ENCODE measurements at regions of chrX and their contacts with region 1.

Region 1: GRCh38 chrX:54044126-54044876 is at the start of gene PHF8:
- DNase-seq: peak; percentile 86
- ATAC-seq: peak; percentile 67
- H3K4me3 ChIP-seq: peak within 1 kb of the TSS; percentile 74 to 79 (median 79)
- H3K27ac ChIP-seq: peak within 1 kb of the TSS; percentile 99
- H3K4me1 ChIP-seq: peaks cover 47% of the 10 kb centered on the region
- H3K27me3 ChIP-seq: no peaks in the 10 kb centered on the region
- CTCF ChIP-seq: 0 out of 2 replicates have a peak, but pooled peaks have one; percentile 2
- EP300 ChIP-seq: peak in 1 of 2 experiments; percentile 18; a peak in 1 of 4 replicates
- POLR2A ChIP-seq: peak; percentile 45 to 56; a peak in 3 of 4 replicates
- RAD21 ChIP-seq: no peak
- total RNA-seq, gene PHF8: 15.5 and 22.0 TPM in 2 replicates

Region 2: GRCh38 chrX:53864591-53864990 is 179.7 kb before region 1 on chrX:
- CTCF ChIA-PET with region 1: no interaction called
- POLR2A ChIA-PET with region 1: no interaction called
- in situ Hi-C with region 1: no loop called
- intact Hi-C with region 1: no loop called
- DNase-seq: no peak
- ATAC-seq: no peak
- H3K4me3 ChIP-seq: no peak overlapping the region
- H3K27ac ChIP-seq: no peak overlapping the region
- H3K4me1 ChIP-seq: no peaks in the 10 kb centered on the region
- H3K27me3 ChIP-seq: no peaks in the 10 kb centered on the region
- CTCF ChIP-seq: no peak
- EP300 ChIP-seq: no peak
- POLR2A ChIP-seq: no peak
- RAD21 ChIP-seq: no peak

Region 3: GRCh38 chrX:54093159-54093558 is 48.9 kb after region 1 on chrX:
- CTCF ChIA-PET with region 1: no interaction called
- POLR2A ChIA-PET with region 1: interaction called, 3 read pairs
- in situ Hi-C with region 1: no loop called
- intact Hi-C with region 1: loop called (anchors 10 kb)
- DNase-seq: no peak
- ATAC-seq: no peak
- H3K4me3 ChIP-seq: no peak overlapping the region
- H3K27ac ChIP-seq: no peak overlapping the region
- H3K4me1 ChIP-seq: 0 out of 2 replicates have a peak, but pooled peaks cover 10% of the 10 kb centered on the region
- H3K27me3 ChIP-seq: no peaks in the 10 kb centered on the region
- CTCF ChIP-seq: no peak
- EP300 ChIP-seq: no peak
- POLR2A ChIP-seq: no peak
- RAD21 ChIP-seq: no peak

Region 4: DNA sequence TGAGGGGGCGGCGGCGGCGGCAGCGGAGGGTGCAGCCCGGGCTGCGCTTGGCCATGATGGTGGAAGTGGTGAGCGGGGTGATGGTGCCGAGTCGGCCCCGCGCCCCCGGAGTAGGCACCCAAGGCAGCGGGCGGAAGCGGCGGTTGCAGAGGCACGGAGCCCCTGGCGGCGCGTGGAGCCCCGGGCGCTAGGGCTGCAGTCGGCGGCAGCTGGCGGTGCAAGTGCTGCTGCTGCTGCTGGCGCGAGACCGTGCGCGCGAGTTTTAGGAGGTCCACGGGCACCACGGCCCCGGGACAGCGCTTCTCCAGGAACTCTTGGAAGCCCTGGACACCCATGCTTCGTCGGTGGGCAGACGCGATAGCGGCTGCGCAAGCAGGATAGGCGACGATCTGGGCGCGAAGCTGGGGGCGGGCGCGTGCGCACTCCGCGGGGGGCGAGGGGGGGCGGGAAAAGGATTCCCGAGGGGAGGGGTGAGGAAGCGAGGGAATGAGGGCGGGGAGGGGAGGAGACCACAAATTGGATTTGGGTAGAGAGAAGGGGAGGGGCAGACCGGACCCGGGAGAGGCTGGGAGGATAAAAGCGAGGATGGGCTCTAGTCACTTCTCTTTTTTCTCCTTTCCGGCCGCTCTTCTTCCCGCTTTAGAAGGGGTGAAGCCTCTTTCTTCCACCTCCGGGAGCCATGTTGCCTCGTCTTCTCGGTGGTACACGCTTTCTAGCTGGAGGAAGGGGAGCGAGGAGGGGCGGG is 138.7 kb after region 1 on chrX and contains the start of gene FAM120C:
- CTCF ChIA-PET with region 1: no interaction called
- POLR2A ChIA-PET with region 1: interaction called, 23 read pairs
- in situ Hi-C with region 1: loop called (anchors 5 kb)
- intact Hi-C with region 1: loop called (anchors 10 kb)
- DNase-seq: peak; percentile 51
- ATAC-seq: peak; percentile 88
- H3K4me3 ChIP-seq: peak within 1 kb of the TSS; percentile 64 to 77 (median 75)
- H3K27ac ChIP-seq: peak within 1 kb of the TSS; percentile 71
- H3K4me1 ChIP-seq: peaks cover 40% of the 10 kb centered on the region
- H3K27me3 ChIP-seq: no peaks in the 10 kb centered on the region
- CTCF ChIP-seq: no peak
- EP300 ChIP-seq: no peak
- POLR2A ChIP-seq: peak; percentile 50 to 73
- RAD21 ChIP-seq: no peak
- total RNA-seq, gene FAM120C: 7.4 and 7.5 TPM in 2 replicates